BJ (cell line): ENCODE measurements at regions of chr1 and their contacts with region 1.

Region 1: DNA sequence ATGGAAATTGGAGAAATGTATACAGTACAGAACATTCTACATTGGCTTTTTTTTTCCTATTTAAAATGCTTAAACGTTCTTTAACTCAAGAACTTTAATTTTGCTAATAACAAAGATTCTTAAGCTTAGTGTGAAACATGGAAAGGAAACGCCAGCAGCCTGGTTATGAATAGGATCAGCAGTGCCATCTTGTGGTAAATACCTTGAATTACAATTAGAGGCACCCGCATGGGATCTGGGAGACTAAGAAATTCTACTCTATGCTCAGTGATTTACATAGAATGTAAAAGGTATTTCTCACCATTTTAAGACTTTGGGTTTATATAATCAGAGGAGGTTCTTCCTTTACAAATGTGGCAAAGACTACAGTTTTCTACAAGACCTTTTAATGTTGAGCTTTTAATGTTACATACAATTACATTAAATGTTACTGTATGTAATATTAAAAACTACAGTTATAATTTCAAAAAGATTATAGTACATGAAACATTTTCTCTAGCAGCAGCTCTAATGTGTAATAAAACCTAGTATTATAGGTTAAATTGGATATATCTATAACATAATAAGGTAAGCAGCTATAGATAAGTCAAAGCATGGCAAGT is 32.1 kb upstream of the APOBEC4 start:
- DNase-seq: no peak
- H3K4me3 ChIP-seq: no peak overlapping the region
- H3K27me3 ChIP-seq: no peaks in the 10 kb centered on the region
- CTCF ChIP-seq: peak; percentile 72

Region 2: GRCh38 chr1:183609313-183609712 is 75.9 kb before region 1 on chr1:
- CTCF ChIA-PET with region 1: interaction called, 10 read pairs
- POLR2A ChIA-PET with region 1: no interaction called
- DNase-seq: no peak
- H3K4me3 ChIP-seq: no peak overlapping the region
- H3K27me3 ChIP-seq: no peaks in the 10 kb centered on the region
- CTCF ChIP-seq: peak; percentile 66

Region 3: GRCh38 chr1:183655562-183656075 is 29.6 kb before region 1 on chr1:
- CTCF ChIA-PET with region 1: interaction called, 29 read pairs
- POLR2A ChIA-PET with region 1: no interaction called
- DNase-seq: no peak
- H3K4me3 ChIP-seq: no peak overlapping the region
- H3K27me3 ChIP-seq: no peaks in the 10 kb centered on the region
- CTCF ChIP-seq: peak; percentile 79

Region 4: DNA sequence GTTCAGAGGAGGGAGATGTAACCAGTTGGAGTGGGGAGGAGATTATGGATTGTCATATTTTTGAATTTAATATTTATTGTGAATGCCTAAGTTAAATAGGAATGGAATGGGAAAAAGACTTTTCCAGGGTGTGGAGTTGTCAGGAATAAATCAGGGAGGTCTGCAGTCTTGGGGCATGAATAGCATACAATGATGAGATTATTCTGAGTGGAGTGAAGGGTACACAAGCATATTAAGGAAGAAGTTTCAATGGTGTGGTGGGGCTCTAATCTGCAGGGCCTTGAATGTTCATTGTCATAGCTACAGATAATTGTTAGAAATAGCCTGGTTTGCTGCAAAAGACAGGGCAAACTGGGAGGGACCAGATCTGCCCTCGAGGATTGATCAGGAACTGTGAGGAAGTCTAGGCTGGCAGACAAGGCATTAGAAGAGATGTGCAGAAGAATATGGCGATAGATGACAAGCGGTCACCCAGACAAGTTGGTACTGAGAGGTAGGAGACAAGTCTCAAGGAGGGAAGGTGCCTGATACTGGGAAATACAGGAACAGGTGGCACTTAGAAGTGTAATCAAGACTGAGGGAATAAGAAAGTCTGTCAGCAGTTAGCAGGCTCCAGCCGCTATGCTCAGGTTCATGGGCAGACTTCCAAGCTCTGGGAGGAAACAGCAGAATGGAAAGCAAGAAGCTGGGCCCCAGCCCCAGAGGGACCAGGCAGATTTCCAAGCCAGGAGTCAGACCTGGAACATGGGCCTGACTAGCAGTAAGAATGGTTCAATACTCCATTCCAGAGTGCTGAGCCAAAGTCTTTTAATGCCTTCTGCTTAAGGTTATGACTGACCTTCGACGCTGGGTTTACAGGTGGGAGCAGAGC is 98.8 kb after region 1 on chr1:
- CTCF ChIA-PET with region 1: no interaction called
- POLR2A ChIA-PET with region 1: no interaction called
- DNase-seq: no peak
- H3K4me3 ChIP-seq: no peak overlapping the region
- H3K27me3 ChIP-seq: no peaks in the 10 kb centered on the region; the same call in 1 of the 2 replicates
- CTCF ChIP-seq: no peak

Region 5: GRCh38 chr1:183841950-183842794 is 157.0 kb after region 1 on chr1:
- CTCF ChIA-PET with region 1: no interaction called
- POLR2A ChIA-PET with region 1: no interaction called
- DNase-seq: peak; percentile 93
- H3K4me3 ChIP-seq: no peak overlapping the region
- H3K27me3 ChIP-seq: no peaks in the 10 kb centered on the region
- CTCF ChIP-seq: no peak